HCT116 (cell line): ENCODE measurements at regions of chr3 and their contacts with region 1.

Region 1: GRCh38 chr3:49171119-49171774 is at the start of gene KLHDC8B:
- DNase-seq: peak; percentile 54
- ATAC-seq: peak; percentile 90
- H3K4me3 ChIP-seq: peak within 1 kb of the TSS; percentile 57 to 74
- H3K27ac ChIP-seq: peak within 1 kb of the TSS; percentile 58
- H3K4me1 ChIP-seq: peaks cover 18 to 45% of the 10 kb centered on the region in 2 experiments
- H3K27me3 ChIP-seq: no peaks in the 10 kb centered on the region
- CTCF ChIP-seq: peak in 2 of 3 experiments; percentile 91 to 97; a peak in 4 of 6 replicates
- POLR2A ChIP-seq: peak; percentile 36
- RAD21 ChIP-seq: no peak
- total RNA-seq, gene KLHDC8B: 10.4 TPM

Region 2: GRCh38 chr3:49148159-49148558 is 23.1 kb before region 1 on chr3:
- CTCF ChIA-PET with region 1: no interaction called
- POLR2A ChIA-PET with region 1: no interaction called
- RAD21 ChIA-PET with region 1: no interaction called
- intact Hi-C with region 1: no loop called
- DNase-seq: no peak
- ATAC-seq: no peak
- H3K4me3 ChIP-seq: no peak overlapping the region
- H3K27ac ChIP-seq: no peak overlapping the region
- H3K4me1 ChIP-seq: no peaks in the 10 kb centered on the region
- H3K27me3 ChIP-seq: no peaks in the 10 kb centered on the region
- CTCF ChIP-seq: no peak
- POLR2A ChIP-seq: no peak
- RAD21 ChIP-seq: no peak

Region 3: GRCh38 chr3:49181351-49181750 is 10.1 kb after region 1 on chr3:
- CTCF ChIA-PET with region 1: interaction called, 17 read pairs
- POLR2A ChIA-PET with region 1: interaction called, 3 read pairs
- RAD21 ChIA-PET with region 1: no interaction called
- intact Hi-C with region 1: no loop called
- DNase-seq: no peak
- ATAC-seq: no peak
- H3K4me3 ChIP-seq: no peak overlapping the region
- H3K27ac ChIP-seq: no peak overlapping the region
- H3K4me1 ChIP-seq: no peaks in the 10 kb centered on the region
- H3K27me3 ChIP-seq: no peaks in the 10 kb centered on the region
- CTCF ChIP-seq: no peak
- POLR2A ChIP-seq: no peak
- RAD21 ChIP-seq: no peak

Region 4: DNA sequence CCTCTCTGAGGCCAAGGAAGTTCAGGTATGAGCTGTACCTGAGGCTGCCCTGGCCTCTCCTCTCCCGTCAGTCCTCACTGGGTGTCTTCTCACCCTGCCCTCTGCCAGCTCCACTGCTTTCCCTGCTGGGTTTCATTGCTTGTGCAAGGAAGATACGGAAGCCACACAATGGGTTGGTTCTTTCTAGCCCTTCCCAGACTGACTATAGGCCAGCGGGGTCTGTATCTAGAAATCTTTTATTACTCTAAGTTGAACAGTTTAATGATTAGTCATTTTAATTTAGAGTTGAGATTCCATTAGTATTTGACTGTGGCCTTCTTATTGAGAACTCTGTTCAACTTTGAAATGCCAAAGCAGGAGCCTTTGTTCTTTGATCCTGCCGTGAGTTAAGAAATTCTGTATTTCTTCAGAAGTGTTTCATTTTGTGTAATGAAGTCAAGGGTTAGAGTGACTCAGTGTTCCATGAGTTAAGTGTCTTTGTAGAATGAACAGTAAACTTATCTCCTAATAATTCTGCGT is 89.6 kb after region 1 on chr3:
- CTCF ChIA-PET with region 1: interaction called, 3 read pairs
- POLR2A ChIA-PET with region 1: no interaction called
- RAD21 ChIA-PET with region 1: interaction called in 1 of 2 experiments, 4 read pairs
- intact Hi-C with region 1: loop called (anchors 5 kb)
- DNase-seq: peak; percentile 65
- ATAC-seq: peak; percentile 80
- H3K4me3 ChIP-seq: no peak overlapping the region; a peak in 1 of 4 replicates
- H3K27ac ChIP-seq: peak overlapping the region; percentile 96
- H3K4me1 ChIP-seq: peaks cover 58 to 65% of the 10 kb centered on the region in 2 experiments
- H3K27me3 ChIP-seq: no peaks in the 10 kb centered on the region
- CTCF ChIP-seq: no peak
- POLR2A ChIP-seq: no peak
- RAD21 ChIP-seq: no peak

Region 5: GRCh38 chr3:49719214-49719884 is 548.1 kb after region 1 on chr3 and contains the start of gene AMIGO3:
- CTCF ChIA-PET with region 1: no interaction called
- POLR2A ChIA-PET with region 1: no interaction called
- RAD21 ChIA-PET with region 1: no interaction called
- intact Hi-C with region 1: no loop called
- DNase-seq: peak; percentile 61
- ATAC-seq: peak; percentile 71
- H3K4me3 ChIP-seq: peak within 1 kb of the TSS; percentile 39 to 52
- H3K27ac ChIP-seq: peak within 1 kb of the TSS; percentile 39; the same call in 1 of the 2 replicates
- H3K4me1 ChIP-seq: peaks cover 8 to 27% of the 10 kb centered on the region in 2 experiments; a peak in 3 of 4 replicates
- H3K27me3 ChIP-seq: no peaks in the 10 kb centered on the region
- CTCF ChIP-seq: peak in 2 of 3 experiments; percentile 38 to 57; a peak in 4 of 6 replicates
- POLR2A ChIP-seq: peak; percentile 74
- RAD21 ChIP-seq: no peak
- total RNA-seq, gene AMIGO3: 0.32 TPM